ENCODE measurements at regions of chr14 and their contacts with region 1.

Region 1: GRCh38 chr14:101230161-101230850 is 326.8 kb upstream of the RTL1 start:
- DNase-seq: no peak
- H3K4me3 ChIP-seq: no peak overlapping the region
- H3K27ac ChIP-seq: no peak overlapping the region
- H3K4me1 ChIP-seq: peaks cover 0 to 13% (median 11%) of the 10 kb centered on the region in 4 donors
- H3K27me3 ChIP-seq: no peaks in the 10 kb centered on the region
- CTCF ChIP-seq: no peak
- EP300 ChIP-seq: no peak
- POLR2A ChIP-seq: no peak

Region 2: DNA sequence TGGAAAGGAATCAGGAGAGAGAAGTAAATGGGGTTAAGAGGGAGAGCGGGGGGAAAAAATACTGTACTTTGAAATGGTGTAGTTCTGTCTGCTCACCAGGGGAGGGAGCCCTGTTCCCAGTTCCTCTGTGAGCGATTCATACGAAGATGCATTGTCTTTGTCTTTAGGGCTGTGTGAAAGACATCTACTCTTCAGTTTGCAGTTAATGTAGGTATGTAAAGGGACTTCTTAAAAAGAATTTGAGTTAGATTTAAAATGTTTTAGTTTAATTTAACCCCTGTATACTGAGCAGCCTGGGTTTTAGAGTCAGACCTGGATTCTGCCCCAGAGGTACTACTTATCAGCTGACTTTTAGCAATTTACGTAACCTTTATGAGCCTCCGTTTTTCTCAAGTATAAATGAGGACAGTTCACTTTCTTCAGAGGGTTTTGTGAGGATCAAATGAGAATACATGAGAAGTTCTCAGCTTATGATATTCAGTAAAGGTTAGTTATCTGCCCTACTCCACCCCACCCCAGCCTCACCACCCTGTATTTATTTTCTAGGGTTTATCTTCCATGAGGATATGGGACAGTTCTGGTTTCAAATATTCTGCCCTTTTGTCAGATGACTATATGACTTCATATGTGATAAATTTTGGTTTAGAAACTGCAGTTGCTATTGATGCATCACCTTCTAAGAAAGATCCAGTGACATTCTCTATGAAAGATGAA is 1247.6 kb before region 1 on chr14:
- intact Hi-C with region 1: no loop called
- DNase-seq: no peak
- H3K4me3 ChIP-seq: no peak overlapping the region
- H3K27ac ChIP-seq: no peak overlapping the region
- H3K4me1 ChIP-seq: peaks cover 0 to 4% (median 0%) of the 10 kb centered on the region in 4 donors
- H3K27me3 ChIP-seq: no peaks in the 10 kb centered on the region
- CTCF ChIP-seq: peak; percentile 86 to 94 (median 90)
- EP300 ChIP-seq: no peak
- POLR2A ChIP-seq: no peak

Region 3: DNA sequence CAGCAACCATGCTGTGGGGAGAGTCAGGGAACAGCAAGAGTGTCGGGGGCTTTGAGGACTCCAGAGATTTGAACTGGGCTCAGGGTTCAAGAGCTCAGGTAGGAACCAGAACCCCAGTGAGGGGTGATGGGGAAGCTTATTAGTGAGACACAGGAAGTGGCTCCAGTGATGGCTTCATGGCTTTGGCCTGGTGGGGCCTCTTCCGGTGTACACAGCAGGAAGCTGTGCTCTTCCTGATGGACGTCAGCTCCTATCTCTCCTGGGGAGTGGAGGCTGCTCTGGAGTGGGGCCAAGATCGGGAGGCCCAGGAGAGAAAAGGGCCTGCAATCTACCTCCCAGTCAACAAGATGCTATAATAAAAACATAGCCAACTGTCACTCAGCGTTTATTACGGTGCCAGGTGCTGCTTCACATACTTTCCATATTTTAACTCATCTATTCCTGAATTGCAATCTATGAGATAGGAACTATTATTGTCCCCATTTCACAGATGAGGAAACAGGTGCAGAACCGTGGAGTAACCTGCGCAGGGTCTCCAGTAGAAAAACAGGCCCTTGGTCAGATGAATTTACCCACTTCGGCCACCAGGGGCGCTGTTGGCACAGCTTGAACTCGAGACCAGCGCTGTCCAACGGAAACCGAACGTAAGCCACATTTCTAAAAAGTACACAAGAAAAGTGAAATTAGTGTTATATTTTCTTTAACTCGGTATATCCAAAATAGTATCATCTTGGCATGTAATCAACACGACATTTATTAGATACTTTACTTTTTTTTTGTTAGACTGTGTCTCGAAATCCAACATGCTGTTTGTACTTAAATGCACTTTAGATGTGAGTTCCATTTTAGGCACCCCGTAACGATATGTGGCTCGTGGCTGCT is 567.2 kb before region 1 on chr14:
- intact Hi-C with region 1: loop called (anchors 5 kb)
- DNase-seq: peak; percentile 77
- H3K4me3 ChIP-seq: no peak overlapping the region
- H3K27ac ChIP-seq: no peak overlapping the region
- H3K4me1 ChIP-seq: peaks cover 0 to 21% (median 17%) of the 10 kb centered on the region in 4 donors
- H3K27me3 ChIP-seq: peaks cover 0 to 32% (median 13%) of the 10 kb centered on the region in 3 donors
- CTCF ChIP-seq: peak; percentile 62 to 90 (median 80)
- EP300 ChIP-seq: no peak
- POLR2A ChIP-seq: no peak

Region 4: GRCh38 chr14:101035466-101036225 is 194.7 kb before region 1 on chr14:
- intact Hi-C with region 1: no loop called
- DNase-seq: peak; percentile 30
- H3K4me3 ChIP-seq: no peak overlapping the region
- H3K27ac ChIP-seq: no peak overlapping the region
- H3K4me1 ChIP-seq: no peaks in the 10 kb centered on the region
- H3K27me3 ChIP-seq: no peaks in the 10 kb centered on the region
- CTCF ChIP-seq: no peak
- EP300 ChIP-seq: no peak
- POLR2A ChIP-seq: no peak

Region 5: GRCh38 chr14:101183376-101184103 is 46.8 kb before region 1 on chr14:
- intact Hi-C with region 1: loop called (anchors 5 kb)
- DNase-seq: no peak
- H3K4me3 ChIP-seq: no peak overlapping the region
- H3K27ac ChIP-seq: no peak overlapping the region
- H3K4me1 ChIP-seq: no peaks in the 10 kb centered on the region
- H3K27me3 ChIP-seq: peaks cover 0 to 3% (median 0%) of the 10 kb centered on the region in 3 donors
- CTCF ChIP-seq: peak; percentile 44 to 52 (median 48)
- EP300 ChIP-seq: no peak
- POLR2A ChIP-seq: no peak

Measured in sigmoid colon (tissue), 7 donors.